ENCODE measurements at regions of chr15 and their contacts with region 1.

Region 1: GRCh38 chr15:73712088-73712487 is 27.9 kb downstream of the CD276 start:
- DNase-seq: peak in 2 of 4 experiments; percentile 16 to 20
- ATAC-seq: peak; percentile 72
- H3K4me3 ChIP-seq: no peak overlapping the region
- H3K27ac ChIP-seq: no peak overlapping the region
- H3K4me1 ChIP-seq: no peaks in the 10 kb centered on the region
- H3K27me3 ChIP-seq: peaks cover 0 to 6% of the 10 kb centered on the region in 2 experiments; a peak in 2 of 5 replicates
- CTCF ChIP-seq: peak; percentile 24 to 51 (median 42); a peak in 4 of 6 replicates
- EP300 ChIP-seq: no peak
- POLR2A ChIP-seq: no peak
- RAD21 ChIP-seq: peak in 1 of 2 experiments; percentile 50; a peak in 2 of 4 replicates

Region 2: DNA sequence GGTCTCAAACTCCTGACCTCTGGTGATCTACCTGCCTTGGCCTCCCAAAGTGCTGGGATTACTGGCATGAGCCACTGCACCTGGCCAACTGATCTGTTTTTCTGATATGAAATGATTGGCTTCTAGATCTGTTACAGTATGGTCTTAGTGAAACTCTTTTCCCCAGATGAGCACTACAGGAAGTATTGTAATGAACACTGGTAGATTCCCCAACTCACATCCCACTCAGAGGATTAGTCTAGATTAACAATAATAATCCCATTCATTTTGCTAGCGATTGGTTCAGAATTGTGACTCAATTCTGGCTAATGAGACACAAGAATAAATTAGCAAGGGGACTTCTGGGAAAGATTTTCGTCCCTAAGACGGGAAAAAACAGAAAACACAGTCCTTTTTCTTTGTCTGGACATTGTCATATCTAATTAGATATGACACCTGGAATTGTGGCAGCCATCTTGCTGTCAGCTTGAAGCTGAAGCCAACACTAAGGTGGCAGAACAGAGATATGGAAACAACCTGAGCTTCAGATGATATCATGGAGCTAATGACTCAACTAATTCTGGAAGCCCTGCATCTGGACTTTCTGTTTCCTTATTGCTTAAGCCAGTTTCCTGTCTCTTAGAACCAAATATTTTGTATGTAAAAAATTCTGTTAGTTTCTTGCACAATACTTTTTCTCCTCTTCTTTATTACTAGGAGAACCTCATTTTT is 61.5 kb before region 1 on chr15:
- CTCF ChIA-PET with region 1: no interaction called
- POLR2A ChIA-PET with region 1: no interaction called
- in situ Hi-C with region 1: no loop called
- intact Hi-C with region 1: no loop called
- DNase-seq: no peak
- ATAC-seq: no peak
- H3K4me3 ChIP-seq: no peak overlapping the region
- H3K27ac ChIP-seq: no peak overlapping the region
- H3K4me1 ChIP-seq: no peaks in the 10 kb centered on the region
- H3K27me3 ChIP-seq: peaks cover 3 to 4% of the 10 kb centered on the region in 2 experiments; a peak in 3 of 5 replicates
- CTCF ChIP-seq: no peak
- EP300 ChIP-seq: no peak
- POLR2A ChIP-seq: no peak
- RAD21 ChIP-seq: no peak

Region 3: DNA sequence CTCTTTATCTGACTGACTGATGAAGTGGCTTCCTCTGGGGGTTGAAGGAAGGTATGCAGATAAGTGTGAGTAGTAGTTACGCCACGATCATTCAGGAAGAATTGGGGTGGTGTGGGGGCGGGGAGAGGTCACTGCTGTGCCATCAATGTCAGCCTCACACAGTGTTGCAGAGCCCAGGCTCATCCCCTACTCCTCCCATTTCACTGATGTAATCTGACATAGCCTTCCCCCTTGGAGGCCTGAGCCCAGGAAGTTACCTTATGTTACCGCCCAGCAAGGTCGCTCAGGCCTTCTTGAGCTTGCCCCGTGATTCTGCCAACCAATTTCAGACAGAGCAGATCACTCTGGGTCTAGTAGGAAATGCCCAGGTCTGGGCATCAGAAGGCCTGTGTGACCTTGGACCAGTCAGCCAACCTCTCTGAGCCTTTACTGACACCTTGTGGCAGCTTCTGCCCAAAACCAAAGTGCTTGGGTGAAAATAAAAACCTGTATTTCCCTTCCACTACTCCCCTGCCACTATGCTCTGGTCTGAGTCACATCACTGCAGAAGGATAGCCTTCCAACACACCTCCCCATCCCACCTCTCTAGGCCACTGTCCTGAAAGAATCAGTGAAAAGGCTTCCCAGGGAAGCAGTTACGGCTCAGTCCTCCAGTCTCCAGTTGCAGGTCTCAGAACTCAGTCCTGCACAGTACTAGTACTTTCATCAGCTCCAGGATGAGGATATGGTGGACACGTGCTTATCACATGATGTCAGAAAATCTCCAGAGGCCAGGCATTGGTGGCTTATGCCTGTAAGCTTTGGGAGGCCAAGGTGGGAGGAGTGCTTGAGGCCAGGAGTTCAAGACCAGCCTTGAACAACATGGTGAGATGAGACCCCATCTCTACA is 69.2 kb after region 1 on chr15:
- CTCF ChIA-PET with region 1: no interaction called
- POLR2A ChIA-PET with region 1: no interaction called
- in situ Hi-C with region 1: no loop called
- intact Hi-C with region 1: loop called (anchors 2 kb)
- DNase-seq: peak; percentile 60 to 79 (median 69)
- ATAC-seq: peak; percentile 92
- H3K4me3 ChIP-seq: no peak overlapping the region
- H3K27ac ChIP-seq: peak overlapping the region; percentile 10; the same call in 1 of the 3 replicates
- H3K4me1 ChIP-seq: peaks cover 5 to 18% of the 10 kb centered on the region in 2 experiments; a peak in 3 of 5 replicates
- H3K27me3 ChIP-seq: no peaks in the 10 kb centered on the region
- CTCF ChIP-seq: peak; percentile 45 to 61 (median 57); a peak in 5 of 6 replicates
- EP300 ChIP-seq: peak; percentile 56
- POLR2A ChIP-seq: no peak
- RAD21 ChIP-seq: peak; percentile 43 to 65

Region 4: DNA sequence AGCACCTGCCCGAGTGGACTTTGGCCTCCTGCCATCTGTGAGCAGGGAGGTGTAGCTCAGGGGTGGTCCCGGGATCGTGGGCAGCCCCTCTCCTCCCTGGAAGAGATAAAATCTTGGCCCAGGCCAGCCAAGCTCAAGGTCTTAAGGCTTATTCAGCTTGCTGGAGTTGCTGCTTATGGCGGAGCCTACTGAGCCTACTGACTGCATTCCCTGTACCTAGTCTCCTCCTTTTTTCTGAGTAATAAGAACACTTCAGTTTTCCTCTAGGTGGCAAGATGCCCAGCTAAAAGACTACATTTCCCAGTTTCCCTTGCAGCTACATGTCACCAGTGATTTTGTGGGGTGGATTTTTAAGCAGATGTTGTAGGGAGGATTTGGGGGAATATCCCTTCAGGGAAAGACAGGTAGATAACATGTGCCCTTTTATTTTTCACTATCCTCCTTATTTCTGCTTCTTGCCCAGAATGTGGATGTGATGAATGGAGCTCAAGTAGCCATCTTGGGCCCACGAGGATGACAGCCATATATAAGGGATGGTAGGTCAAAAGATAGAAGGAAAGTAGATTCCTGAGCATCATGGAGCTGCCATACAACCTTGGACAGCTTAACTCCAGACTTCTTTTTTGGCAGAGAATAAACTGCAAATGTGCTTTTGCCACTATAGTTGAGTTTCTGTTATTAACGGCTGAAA is 82.5 kb after region 1 on chr15:
- CTCF ChIA-PET with region 1: no interaction called
- POLR2A ChIA-PET with region 1: no interaction called
- in situ Hi-C with region 1: no loop called
- intact Hi-C with region 1: no loop called
- DNase-seq: no peak
- ATAC-seq: peak; percentile 34; the same call in 1 of the 3 replicates
- H3K4me3 ChIP-seq: no peak overlapping the region
- H3K27ac ChIP-seq: no peak overlapping the region
- H3K4me1 ChIP-seq: no peaks in the 10 kb centered on the region; a peak in 1 of 5 replicates
- H3K27me3 ChIP-seq: peaks cover 0 to 35% of the 10 kb centered on the region in 2 experiments; a peak in 2 of 5 replicates
- CTCF ChIP-seq: no peak
- EP300 ChIP-seq: no peak
- POLR2A ChIP-seq: no peak
- RAD21 ChIP-seq: no peak

Region 5: GRCh38 chr15:73908030-73908821 is 196.1 kb after region 1 on chr15:
- CTCF ChIA-PET with region 1: no interaction called
- POLR2A ChIA-PET with region 1: no interaction called
- in situ Hi-C with region 1: no loop called
- intact Hi-C with region 1: loop called (anchors 5 kb)
- DNase-seq: peak; percentile 67 to 75 (median 70)
- ATAC-seq: peak; percentile 100
- H3K4me3 ChIP-seq: no peak overlapping the region
- H3K27ac ChIP-seq: no peak overlapping the region
- H3K4me1 ChIP-seq: no peaks in the 10 kb centered on the region
- H3K27me3 ChIP-seq: peaks cover 0 to 37% of the 10 kb centered on the region in 2 experiments; a peak in 3 of 5 replicates
- CTCF ChIP-seq: peak; percentile 87 to 90 (median 88)
- EP300 ChIP-seq: no peak
- POLR2A ChIP-seq: no peak
- RAD21 ChIP-seq: peak; percentile 57 to 89

Measured in K562 (cell line).